Dendritic cell treated with granulocyte-macrophage colony-stimulating factor and Interleukin-4, amounts not matched to agents 40 ng/mL and 50 ng/mL, for 4 days (primary cell): ENCODE measurements at regions of chrX and their contacts with region 1.

Region 1: DNA sequence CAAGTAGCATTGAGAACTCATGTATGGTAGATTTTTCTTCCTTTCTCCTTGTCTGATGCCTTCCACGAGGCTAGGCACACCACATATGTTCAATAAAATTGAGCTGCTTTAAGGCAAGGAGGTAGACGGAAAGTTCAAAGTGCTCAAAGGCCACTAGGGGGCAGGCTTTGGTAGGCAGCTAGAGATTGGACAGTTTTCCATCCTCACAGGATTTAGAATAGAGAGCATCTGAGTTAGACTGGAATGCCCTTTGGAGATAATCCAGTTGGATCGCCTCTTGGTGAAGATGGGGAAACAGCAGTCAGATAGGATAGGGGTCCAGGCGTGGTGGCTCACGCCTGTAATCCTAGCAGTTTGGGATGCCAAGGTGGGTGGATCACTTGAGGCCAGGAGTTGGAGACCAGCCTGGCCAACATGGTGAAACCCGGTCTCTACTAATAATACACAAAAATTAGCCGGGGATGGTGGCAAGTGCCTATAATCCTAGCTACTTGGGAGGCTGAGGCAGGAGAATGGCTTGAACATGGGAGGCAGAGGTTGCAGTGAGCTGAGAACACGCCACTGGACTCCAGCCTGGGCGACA is 30.4 kb downstream of the ELF4 start:
- H3K4me3 Mint-ChIP-seq: no peak overlapping the region
- H3K27ac Mint-ChIP-seq: no peak overlapping the region
- H3K4me1 Mint-ChIP-seq: peaks cover 49% of the 10 kb centered on the region
- H3K27me3 Mint-ChIP-seq: no peaks in the 10 kb centered on the region

Region 2: DNA sequence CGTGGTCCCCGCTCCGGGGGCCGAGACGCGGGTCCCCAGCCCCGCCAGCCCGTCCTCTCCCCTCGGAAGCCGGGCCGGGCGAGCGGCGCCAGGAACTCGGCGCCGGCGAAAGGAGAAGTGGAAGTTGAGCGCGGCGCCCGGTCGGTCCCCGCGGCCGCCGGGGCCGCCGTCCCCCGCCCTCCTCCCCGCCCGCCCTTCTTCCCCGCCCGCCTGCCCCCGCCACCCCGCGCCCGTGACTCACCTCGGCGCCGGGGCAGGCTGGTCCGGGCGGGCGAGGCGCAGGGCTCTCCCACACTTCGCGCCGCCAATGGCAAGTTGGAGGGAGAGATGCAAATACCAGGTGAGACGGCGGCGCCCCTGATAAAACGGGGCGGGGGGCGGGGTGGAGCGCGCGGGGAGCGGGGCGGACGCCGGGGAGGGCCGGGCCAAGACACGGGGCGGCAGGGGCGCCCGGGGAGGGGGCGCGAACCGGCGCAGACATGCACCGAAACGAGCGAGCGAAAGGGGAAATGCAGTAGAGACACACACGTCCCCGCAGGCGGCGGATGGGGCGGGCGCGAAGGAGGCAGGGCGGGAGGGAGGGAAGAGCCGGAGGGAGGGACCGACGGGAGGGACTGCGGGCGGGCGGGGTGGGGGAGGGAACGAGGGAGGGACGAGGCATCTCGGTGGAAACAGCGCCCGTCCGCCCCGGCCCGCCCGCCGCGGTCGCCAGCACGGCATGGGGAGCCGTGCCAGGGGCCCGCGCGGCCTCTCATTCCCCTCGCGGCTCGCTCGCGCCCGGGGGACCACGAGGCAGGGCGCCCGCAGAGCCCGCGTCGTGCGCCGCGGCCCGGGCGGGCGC is 30.7 kb after region 1 on chrX and contains the start of gene ELF4:
- intact Hi-C with region 1: loop called (anchors 1 kb)
- H3K4me3 Mint-ChIP-seq: peak within 1 kb of the TSS; percentile 97
- H3K27ac Mint-ChIP-seq: peak within 1 kb of the TSS; percentile 96
- H3K4me1 Mint-ChIP-seq: peaks cover 65% of the 10 kb centered on the region
- H3K27me3 Mint-ChIP-seq: peaks cover 2% of the 10 kb centered on the region

Region 3: GRCh38 chrX:130120746-130121504 is 41.0 kb after region 1 on chrX:
- intact Hi-C with region 1: loop called (anchors 1 kb)
- H3K4me3 Mint-ChIP-seq: peak overlapping the region; percentile 74
- H3K27ac Mint-ChIP-seq: peak overlapping the region; percentile 89
- H3K4me1 Mint-ChIP-seq: peaks cover 53% of the 10 kb centered on the region
- H3K27me3 Mint-ChIP-seq: no peaks in the 10 kb centered on the region

Region 4: DNA sequence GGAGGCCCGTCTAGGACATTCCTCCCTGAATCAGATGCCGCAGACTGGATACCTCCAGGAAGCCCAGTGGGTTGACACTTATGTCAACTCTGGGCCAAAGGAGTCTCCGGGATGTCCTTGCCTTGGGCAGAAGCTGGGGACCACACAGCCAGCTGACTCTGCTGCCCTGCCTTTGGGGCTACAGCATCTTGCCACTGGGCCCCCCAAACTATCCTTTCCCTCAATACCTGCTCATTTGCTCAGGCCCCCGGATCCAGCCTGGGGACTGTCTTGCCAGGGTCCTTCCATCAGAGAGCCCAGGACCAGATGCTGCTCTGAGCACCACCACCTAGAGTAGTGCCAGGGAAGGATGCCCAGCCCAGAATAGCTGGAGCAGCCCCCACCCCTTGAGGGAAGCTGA is 110.9 kb after region 1 on chrX:
- intact Hi-C with region 1: loop called (anchors 2 kb)
- H3K4me3 Mint-ChIP-seq: no peak overlapping the region
- H3K27ac Mint-ChIP-seq: no peak overlapping the region
- H3K4me1 Mint-ChIP-seq: peaks cover 9% of the 10 kb centered on the region
- H3K27me3 Mint-ChIP-seq: no peaks in the 10 kb centered on the region